ENCODE measurements at regions of chr10 and their contacts with region 1.

Region 1: GRCh38 chr10:95651346-95652060 is 5.0 kb downstream of the ALDH18A1 start:
- DNase-seq: no peak
- H3K4me3 ChIP-seq: no peak overlapping the region
- H3K27ac ChIP-seq: no peak overlapping the region
- H3K4me1 ChIP-seq: peaks cover 25% of the 10 kb centered on the region
- H3K27me3 ChIP-seq: no peaks in the 10 kb centered on the region
- CTCF ChIP-seq: no peak
- POLR2A ChIP-seq: no peak

Region 2: DNA sequence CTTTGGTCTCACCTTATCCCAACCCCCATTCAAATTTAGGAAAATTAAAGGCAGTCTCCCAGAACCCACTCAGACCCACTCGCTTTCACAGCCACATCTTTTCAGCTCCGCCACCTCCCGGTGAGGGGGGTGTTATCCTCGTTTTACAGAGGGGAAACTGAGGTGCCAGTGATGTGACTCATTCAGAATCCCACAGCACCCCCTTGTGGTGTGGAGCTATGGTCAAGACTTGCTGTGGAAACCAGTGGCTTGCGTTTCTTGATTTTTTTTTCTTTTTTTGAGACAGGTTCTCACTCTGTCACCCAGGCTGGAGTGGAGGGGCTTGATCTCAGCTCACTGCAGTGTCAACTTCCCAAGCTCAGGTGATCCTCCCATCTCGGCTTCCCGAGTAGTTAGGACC is 1730.2 kb before region 1 on chr10:
- intact Hi-C with region 1: loop called (anchors 5 kb)
- DNase-seq: no peak
- H3K4me3 ChIP-seq: no peak overlapping the region
- H3K27ac ChIP-seq: no peak overlapping the region
- H3K4me1 ChIP-seq: no peaks in the 10 kb centered on the region
- H3K27me3 ChIP-seq: no peaks in the 10 kb centered on the region
- CTCF ChIP-seq: no peak
- POLR2A ChIP-seq: no peak

Region 3: GRCh38 chr10:95056744-95057363 is 594.6 kb before region 1 on chr10:
- intact Hi-C with region 1: no loop called
- DNase-seq: no peak
- H3K4me3 ChIP-seq: no peak overlapping the region
- H3K27ac ChIP-seq: no peak overlapping the region
- H3K4me1 ChIP-seq: no peaks in the 10 kb centered on the region
- H3K27me3 ChIP-seq: no peaks in the 10 kb centered on the region
- CTCF ChIP-seq: no peak
- POLR2A ChIP-seq: no peak

Measured in vagina (tissue), 2 donors.